Calu3 (cell line): ENCODE measurements at regions of chr18 and their contacts with region 1.

Region 1: GRCh38 chr18:35949903-35950627 is 22.4 kb upstream of the RMP24 start:
- DNase-seq: peak; percentile 65
- H3K4me3 Mint-ChIP-seq: peak overlapping the region; percentile 80
- H3K27ac Mint-ChIP-seq: no peak overlapping the region
- H3K4me1 Mint-ChIP-seq: peaks cover 16% of the 10 kb centered on the region
- H3K27me3 Mint-ChIP-seq: no peaks in the 10 kb centered on the region
- CTCF ChIP-seq: peak; percentile 91

Region 2: DNA sequence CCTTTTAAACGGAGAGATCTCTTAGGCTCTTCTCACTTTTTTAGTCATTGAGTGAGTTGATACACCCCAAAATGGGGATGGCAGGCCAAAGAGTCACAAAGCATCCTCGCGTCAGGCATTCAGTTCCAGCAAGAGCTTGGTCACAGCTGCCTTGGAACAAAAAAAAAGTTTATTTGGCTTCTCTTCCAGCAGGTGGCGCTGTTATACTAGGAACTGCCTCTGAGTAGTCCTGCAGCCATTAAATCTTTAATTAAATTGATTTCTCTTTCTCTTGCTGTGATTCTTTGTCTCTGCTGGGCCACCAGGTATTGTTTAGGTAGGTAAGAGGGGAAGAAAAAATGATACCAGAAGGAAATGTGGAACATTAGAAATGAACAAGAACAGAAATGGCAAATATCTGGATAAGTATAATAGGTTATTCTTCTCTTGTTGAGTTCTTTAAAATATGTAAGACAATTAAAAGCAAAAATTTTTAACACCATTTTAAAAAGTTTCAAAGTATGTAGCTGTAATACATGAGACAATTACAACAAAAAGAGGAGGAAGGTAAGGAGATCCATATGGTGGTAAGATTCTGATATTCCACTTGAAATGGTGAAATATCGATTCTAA is 193.5 kb before region 1 on chr18:
- CTCF ChIA-PET with region 1: interaction called, 15 read pairs
- intact Hi-C with region 1: loop called (anchors 1 kb)
- DNase-seq: peak; percentile 68
- H3K4me3 Mint-ChIP-seq: no peak overlapping the region
- H3K27ac Mint-ChIP-seq: no peak overlapping the region
- H3K4me1 Mint-ChIP-seq: no peaks in the 10 kb centered on the region
- H3K27me3 Mint-ChIP-seq: peaks cover 43% of the 10 kb centered on the region
- CTCF ChIP-seq: peak; percentile 78

Region 3: DNA sequence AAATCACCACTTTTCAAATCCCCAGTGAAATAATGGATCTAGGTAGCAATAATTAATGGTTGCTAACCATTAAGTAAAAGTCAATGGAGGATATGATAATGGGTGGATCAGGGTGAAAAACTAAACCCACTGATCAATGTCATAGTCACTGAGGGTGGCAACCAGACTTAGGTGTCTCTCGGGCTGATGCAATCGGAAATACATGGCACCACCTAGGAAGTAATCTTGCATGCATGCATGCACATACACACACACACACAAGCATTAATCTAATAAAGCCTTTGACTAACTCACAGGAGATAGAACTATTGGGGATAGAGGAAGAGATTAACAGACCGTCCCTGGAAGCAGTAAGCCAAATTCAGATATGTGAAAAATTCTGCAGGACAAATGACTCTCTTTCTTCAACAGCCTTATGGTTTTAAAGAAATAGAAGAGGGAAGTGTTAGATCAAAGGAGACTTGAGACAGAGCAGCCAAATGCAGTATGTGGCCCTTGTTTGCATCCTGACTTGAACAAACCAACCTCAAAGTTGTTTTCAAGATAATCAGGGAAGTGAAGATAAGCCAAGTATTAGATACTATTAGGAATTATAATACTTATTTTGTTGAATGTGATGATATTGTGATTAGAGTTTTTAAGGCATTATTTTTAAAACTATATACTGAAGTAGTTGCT is 163.6 kb before region 1 on chr18:
- CTCF ChIA-PET with region 1: no interaction called
- intact Hi-C with region 1: no loop called
- DNase-seq: no peak
- H3K4me3 Mint-ChIP-seq: no peak overlapping the region
- H3K27ac Mint-ChIP-seq: no peak overlapping the region
- H3K4me1 Mint-ChIP-seq: no peaks in the 10 kb centered on the region
- H3K27me3 Mint-ChIP-seq: peaks cover 19% of the 10 kb centered on the region
- CTCF ChIP-seq: no peak

Region 4: GRCh38 chr18:35917044-35917443 is 33.0 kb before region 1 on chr18:
- CTCF ChIA-PET with region 1: no interaction called
- intact Hi-C with region 1: loop called (anchors 1 kb)
- DNase-seq: no peak
- H3K4me3 Mint-ChIP-seq: no peak overlapping the region
- H3K27ac Mint-ChIP-seq: no peak overlapping the region
- H3K4me1 Mint-ChIP-seq: no peaks in the 10 kb centered on the region
- H3K27me3 Mint-ChIP-seq: peaks cover 44% of the 10 kb centered on the region
- CTCF ChIP-seq: peak; percentile 14

Region 5: GRCh38 chr18:35939138-35939537 is 10.9 kb before region 1 on chr18:
- CTCF ChIA-PET with region 1: interaction called, 12 read pairs
- intact Hi-C with region 1: no loop called
- DNase-seq: no peak
- H3K4me3 Mint-ChIP-seq: no peak overlapping the region
- H3K27ac Mint-ChIP-seq: no peak overlapping the region
- H3K4me1 Mint-ChIP-seq: peaks cover 32% of the 10 kb centered on the region
- H3K27me3 Mint-ChIP-seq: no peaks in the 10 kb centered on the region
- CTCF ChIP-seq: no peak